Activated B cell treated with CpG ODN at 0.5 μM for 24 hours (primary cell): ENCODE measurements at regions of chr1 and their contacts with region 1.

Region 1: GRCh38 chr1:36149237-36149972 is at the start of gene TRAPPC3:
- DNase-seq: peak; percentile 96
- ATAC-seq: peak; percentile 89
- H3K4me3 Mint-ChIP-seq: peak within 1 kb of the TSS; percentile 94
- H3K27ac Mint-ChIP-seq: peak within 1 kb of the TSS; percentile 95
- H3K4me1 Mint-ChIP-seq: peaks cover 55% of the 10 kb centered on the region
- H3K27me3 Mint-ChIP-seq: no peaks in the 10 kb centered on the region
- CTCF ChIP-seq: no peak
- total RNA-seq, gene TRAPPC3: 45.3 and 48.5 TPM in 2 replicates

Region 2: GRCh38 chr1:35629051-35629450 is 520.4 kb before region 1 on chr1:
- CTCF ChIA-PET with region 1: no interaction called
- POLR2A ChIA-PET with region 1: no interaction called
- intact Hi-C with region 1: no loop called
- DNase-seq: no peak
- ATAC-seq: no peak
- H3K4me3 Mint-ChIP-seq: no peak overlapping the region
- H3K27ac Mint-ChIP-seq: no peak overlapping the region
- H3K4me1 Mint-ChIP-seq: no peaks in the 10 kb centered on the region
- H3K27me3 Mint-ChIP-seq: no peaks in the 10 kb centered on the region
- CTCF ChIP-seq: no peak

Region 3: GRCh38 chr1:36088575-36089443 is 60.6 kb before region 1 on chr1 and contains the start of gene ADPRS:
- CTCF ChIA-PET with region 1: no interaction called
- POLR2A ChIA-PET with region 1: no interaction called
- intact Hi-C with region 1: loop called (anchors 1 kb)
- DNase-seq: peak; percentile 90
- ATAC-seq: peak; percentile 85
- H3K4me3 Mint-ChIP-seq: peak within 1 kb of the TSS; percentile 89
- H3K27ac Mint-ChIP-seq: peak within 1 kb of the TSS; percentile 88
- H3K4me1 Mint-ChIP-seq: peaks cover 17% of the 10 kb centered on the region
- H3K27me3 Mint-ChIP-seq: peaks cover 18% of the 10 kb centered on the region
- CTCF ChIP-seq: no peak
- total RNA-seq, gene ADPRS: 23.0 and 23.9 TPM in 2 replicates

Region 4: DNA sequence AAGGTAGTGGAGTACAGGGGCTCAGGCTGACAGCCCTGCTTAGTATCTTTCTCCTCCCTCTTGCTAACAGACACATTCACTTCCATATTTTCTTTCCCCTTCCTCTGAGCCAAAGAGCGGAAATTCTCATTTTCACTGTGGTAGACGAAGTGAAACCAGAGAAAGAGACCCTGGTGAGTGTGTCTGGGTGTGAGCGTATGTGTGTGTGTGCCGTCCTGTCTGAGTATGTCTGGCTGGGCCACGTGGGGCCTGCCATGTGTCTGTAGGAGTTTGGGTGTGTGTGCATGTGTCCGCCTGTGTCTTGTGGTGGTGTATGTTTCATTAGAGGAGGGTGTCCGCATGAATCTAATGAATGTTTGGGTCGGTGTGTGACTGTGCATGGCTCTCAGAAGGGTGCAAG is 26.0 kb before region 1 on chr1:
- CTCF ChIA-PET with region 1: no interaction called
- POLR2A ChIA-PET with region 1: no interaction called
- intact Hi-C with region 1: loop called (anchors 1 kb)
- DNase-seq: peak; percentile 26
- ATAC-seq: peak; percentile 80
- H3K4me3 Mint-ChIP-seq: peak overlapping the region; percentile 62
- H3K27ac Mint-ChIP-seq: peak overlapping the region; percentile 10
- H3K4me1 Mint-ChIP-seq: peaks cover 30% of the 10 kb centered on the region
- H3K27me3 Mint-ChIP-seq: peaks cover 12% of the 10 kb centered on the region
- CTCF ChIP-seq: no peak

Region 5: GRCh38 chr1:36166136-36166535 is 16.7 kb after region 1 on chr1:
- CTCF ChIA-PET with region 1: interaction called, 48 read pairs
- POLR2A ChIA-PET with region 1: interaction called, 95 read pairs
- intact Hi-C with region 1: loop called (anchors 1 kb)
- DNase-seq: no peak
- ATAC-seq: no peak
- H3K4me3 Mint-ChIP-seq: no peak overlapping the region
- H3K27ac Mint-ChIP-seq: no peak overlapping the region
- H3K4me1 Mint-ChIP-seq: peaks cover 30% of the 10 kb centered on the region
- H3K27me3 Mint-ChIP-seq: no peaks in the 10 kb centered on the region
- CTCF ChIP-seq: no peak

Region 6: GRCh38 chr1:36223993-36224536 is 74.7 kb after region 1 on chr1 and contains the start of gene THRAP3:
- CTCF ChIA-PET with region 1: interaction called, 4 read pairs
- POLR2A ChIA-PET with region 1: interaction called, 62 read pairs
- intact Hi-C with region 1: loop called (anchors 1 kb)
- DNase-seq: peak; percentile 98
- ATAC-seq: peak; percentile 89
- H3K4me3 Mint-ChIP-seq: peak within 1 kb of the TSS; percentile 99
- H3K27ac Mint-ChIP-seq: peak within 1 kb of the TSS; percentile 100
- H3K4me1 Mint-ChIP-seq: peaks cover 36% of the 10 kb centered on the region
- H3K27me3 Mint-ChIP-seq: no peaks in the 10 kb centered on the region
- CTCF ChIP-seq: no peak
- total RNA-seq, gene THRAP3: 142 and 145 TPM in 2 replicates

Region 7: DNA sequence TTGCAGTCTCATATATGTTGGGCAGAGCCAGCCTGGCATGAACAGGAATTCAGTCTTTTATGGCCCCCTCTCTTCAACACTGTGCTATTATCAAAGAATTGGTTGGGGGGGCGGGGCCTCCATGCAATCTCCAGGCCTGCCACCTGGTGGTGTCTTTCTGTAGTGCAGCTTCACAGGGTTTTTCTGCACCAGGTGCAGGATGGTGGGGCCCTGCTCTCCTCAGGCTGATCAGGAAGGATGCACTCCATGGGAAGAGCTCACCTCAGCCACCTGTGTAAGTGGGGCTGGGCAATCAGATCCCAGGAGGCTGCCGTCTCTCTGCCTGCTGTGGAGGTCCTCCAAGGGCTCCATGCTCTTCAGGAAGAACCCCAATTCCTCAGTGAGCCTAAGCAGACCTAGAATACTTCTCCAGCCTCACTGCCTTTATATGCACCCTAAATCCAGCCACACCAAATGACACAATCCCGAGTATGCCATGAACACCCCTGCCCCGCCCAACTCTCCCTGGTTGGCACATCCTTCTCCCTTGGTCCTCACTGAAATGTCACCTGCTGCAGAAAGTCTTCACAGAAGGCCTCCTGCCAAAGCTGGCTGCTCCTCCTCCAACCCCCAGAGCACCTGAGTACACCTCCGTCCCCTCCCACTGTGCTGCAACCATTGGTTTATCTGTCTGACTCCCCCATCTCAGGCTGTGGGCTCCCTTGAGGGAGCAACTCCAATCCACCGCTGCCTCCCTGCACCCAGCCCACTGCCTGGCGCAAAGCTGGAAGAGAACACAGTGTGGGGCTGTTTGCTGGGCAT is 219.9 kb after region 1 on chr1:
- CTCF ChIA-PET with region 1: no interaction called
- POLR2A ChIA-PET with region 1: no interaction called
- intact Hi-C with region 1: loop called (anchors 1 kb)
- DNase-seq: peak; percentile 77
- ATAC-seq: peak; percentile 64
- H3K4me3 Mint-ChIP-seq: peak overlapping the region; percentile 28
- H3K27ac Mint-ChIP-seq: peak overlapping the region; percentile 93
- H3K4me1 Mint-ChIP-seq: peaks cover 84% of the 10 kb centered on the region
- H3K27me3 Mint-ChIP-seq: no peaks in the 10 kb centered on the region
- CTCF ChIP-seq: no peak

Region 8: DNA sequence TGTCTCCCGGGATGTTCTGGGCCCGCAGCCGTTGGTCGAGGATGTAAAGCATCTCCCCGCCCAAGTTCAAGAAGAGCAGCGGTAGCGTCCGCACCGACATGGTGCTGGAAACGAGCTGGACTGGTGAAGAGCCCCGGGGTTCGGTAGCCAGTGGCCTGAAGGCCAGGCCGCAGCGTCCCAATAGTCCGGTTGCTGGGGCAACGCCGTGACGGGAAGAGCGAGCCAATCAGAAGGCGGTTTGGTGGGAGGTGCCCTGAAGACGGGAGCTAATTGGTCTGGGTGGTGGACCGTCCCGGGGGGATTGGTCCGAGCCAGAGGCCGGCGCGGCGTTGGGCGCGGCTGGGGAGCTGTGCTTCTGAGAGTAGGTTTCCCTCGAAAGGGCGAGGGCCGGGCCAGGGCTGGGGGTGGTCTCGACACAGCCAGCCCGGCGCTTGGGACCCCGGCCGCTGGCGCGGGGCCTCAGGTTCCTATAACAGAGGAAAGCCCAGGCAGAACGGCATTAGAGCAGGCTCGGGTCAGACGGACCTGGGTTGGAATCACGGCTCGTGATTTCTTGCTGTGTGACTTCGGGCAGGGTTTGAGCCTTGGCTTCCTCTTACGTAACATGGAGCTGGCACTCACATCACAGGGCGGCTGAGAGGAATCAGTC is 301.0 kb after region 1 on chr1 and contains the start of gene OSCP1:
- CTCF ChIA-PET with region 1: no interaction called
- POLR2A ChIA-PET with region 1: interaction called, 14 read pairs
- intact Hi-C with region 1: loop called (anchors 2 kb)
- DNase-seq: peak; percentile 88
- ATAC-seq: peak; percentile 97
- H3K4me3 Mint-ChIP-seq: peak within 1 kb of the TSS; percentile 90
- H3K27ac Mint-ChIP-seq: peak within 1 kb of the TSS; percentile 97
- H3K4me1 Mint-ChIP-seq: peaks cover 18% of the 10 kb centered on the region
- H3K27me3 Mint-ChIP-seq: no peaks in the 10 kb centered on the region
- CTCF ChIP-seq: no peak
- total RNA-seq, gene OSCP1: 1.2 and 1.8 TPM in 2 replicates